ENCODE measurements at regions of chr16 and their contacts with region 1.

Region 1: GRCh38 chr16:82229796-82230619 is 60.0 kb upstream of the MPHOSPH6 start:
- DNase-seq: peak; percentile 55
- ATAC-seq: no peak
- H3K4me3 ChIP-seq: no peak overlapping the region
- H3K4me3 Mint-ChIP-seq: no peak overlapping the region
- H3K27ac ChIP-seq: no peak overlapping the region
- H3K27ac Mint-ChIP-seq: no peak overlapping the region
- H3K4me1 ChIP-seq: no peaks in the 10 kb centered on the region
- H3K4me1 Mint-ChIP-seq: no peaks in the 10 kb centered on the region
- H3K27me3 ChIP-seq: no peaks in the 10 kb centered on the region
- H3K27me3 Mint-ChIP-seq: peaks cover 34% of the 10 kb centered on the region
- CTCF ChIP-seq: peak; percentile 91

Region 2: GRCh38 chr16:81204798-81205680 is 1025.0 kb before region 1 on chr16:
- CTCF ChIA-PET with region 1: no interaction called
- POLR2A ChIA-PET with region 1: no interaction called
- intact Hi-C with region 1: loop called (anchors 10 kb)
- DNase-seq: peak; percentile 59
- ATAC-seq: no peak
- H3K4me3 ChIP-seq: no peak overlapping the region
- H3K4me3 Mint-ChIP-seq: no peak overlapping the region
- H3K27ac ChIP-seq: no peak overlapping the region
- H3K27ac Mint-ChIP-seq: no peak overlapping the region
- H3K4me1 ChIP-seq: no peaks in the 10 kb centered on the region
- H3K4me1 Mint-ChIP-seq: no peaks in the 10 kb centered on the region
- H3K27me3 ChIP-seq: peaks cover 0 to 2% (median 0%) of the 10 kb centered on the region in 4 experiments
- H3K27me3 Mint-ChIP-seq: peaks cover 19% of the 10 kb centered on the region
- CTCF ChIP-seq: peak; percentile 72

Region 3: DNA sequence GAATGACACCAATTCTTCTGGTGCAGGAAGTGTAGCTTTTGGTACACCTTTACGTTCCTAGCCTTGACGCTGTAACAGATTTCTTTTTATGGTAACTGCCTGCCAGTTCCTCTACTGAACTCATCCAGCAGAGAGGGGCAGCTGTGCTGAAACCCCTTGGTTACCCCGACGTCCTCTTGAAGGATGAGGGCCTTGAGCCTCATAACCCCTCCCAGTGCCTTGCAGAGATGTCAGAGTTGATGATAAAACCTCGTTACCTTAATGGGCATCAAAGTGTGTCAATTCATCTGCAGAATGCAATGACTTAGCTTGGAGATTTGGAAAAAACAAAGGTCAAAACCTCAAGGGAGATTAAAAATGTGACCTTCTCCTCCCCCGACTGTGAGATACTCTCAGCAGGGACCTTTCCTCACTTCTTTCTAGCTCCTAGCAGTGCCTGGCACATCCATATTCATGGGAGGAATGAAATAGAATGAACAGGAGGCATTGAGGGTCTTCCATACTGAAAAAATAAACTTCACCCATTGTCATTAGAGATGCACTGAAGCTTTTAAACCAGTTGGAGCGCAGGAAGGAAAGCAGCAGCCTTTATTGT is 287.9 kb before region 1 on chr16:
- CTCF ChIA-PET with region 1: interaction called, 10 read pairs
- POLR2A ChIA-PET with region 1: no interaction called
- intact Hi-C with region 1: no loop called
- DNase-seq: no peak
- ATAC-seq: no peak
- H3K4me3 ChIP-seq: no peak overlapping the region
- H3K4me3 Mint-ChIP-seq: no peak overlapping the region
- H3K27ac ChIP-seq: no peak overlapping the region
- H3K27ac Mint-ChIP-seq: no peak overlapping the region
- H3K4me1 ChIP-seq: no peaks in the 10 kb centered on the region
- H3K4me1 Mint-ChIP-seq: no peaks in the 10 kb centered on the region
- H3K27me3 ChIP-seq: no peaks in the 10 kb centered on the region
- H3K27me3 Mint-ChIP-seq: no peaks in the 10 kb centered on the region
- CTCF ChIP-seq: no peak

Region 4: GRCh38 chr16:82093666-82094300 is 136.2 kb before region 1 on chr16:
- CTCF ChIA-PET with region 1: no interaction called
- POLR2A ChIA-PET with region 1: no interaction called
- intact Hi-C with region 1: no loop called
- DNase-seq: no peak
- ATAC-seq: no peak
- H3K4me3 ChIP-seq: no peak overlapping the region
- H3K4me3 Mint-ChIP-seq: no peak overlapping the region
- H3K27ac ChIP-seq: no peak overlapping the region
- H3K27ac Mint-ChIP-seq: no peak overlapping the region
- H3K4me1 ChIP-seq: no peaks in the 10 kb centered on the region
- H3K4me1 Mint-ChIP-seq: no peaks in the 10 kb centered on the region
- H3K27me3 ChIP-seq: peaks cover 0 to 14% (median 0%) of the 10 kb centered on the region in 4 experiments
- H3K27me3 Mint-ChIP-seq: peaks cover 32% of the 10 kb centered on the region
- CTCF ChIP-seq: no peak

Measured in B cell (primary cell).